ENCODE measurements at regions of chr1 and their contacts with region 1.

Region 1: GRCh38 chr1:68120136-68120791 is 69.8 kb upstream of the DIRAS3 start:
- DNase-seq: peak; percentile 41
- H3K4me3 ChIP-seq: no peak overlapping the region
- H3K27ac ChIP-seq: peak overlapping the region; percentile 43 to 67 (median 49)
- H3K4me1 ChIP-seq: peaks cover 0 to 4% (median 0%) of the 10 kb centered on the region in 4 donors
- H3K27me3 ChIP-seq: no peaks in the 10 kb centered on the region
- CTCF ChIP-seq: peak; percentile 78 to 89 (median 80)
- EP300 ChIP-seq: no peak
- POLR2A ChIP-seq: no peak

Region 2: GRCh38 chr1:67760030-67760821 is 360.0 kb before region 1 on chr1:
- in situ Hi-C with region 1: loop called in 2 of 4 experiments (anchors 10 kb)
- intact Hi-C with region 1: no loop called
- DNase-seq: peak; percentile 85
- H3K4me3 ChIP-seq: no peak overlapping the region
- H3K27ac ChIP-seq: peak overlapping the region; percentile 63 to 81 (median 76)
- H3K4me1 ChIP-seq: peaks cover 24 to 78% (median 38%) of the 10 kb centered on the region in 4 donors
- H3K27me3 ChIP-seq: no peaks in the 10 kb centered on the region
- CTCF ChIP-seq: peak; percentile 82 to 96 (median 86)
- EP300 ChIP-seq: no peak
- POLR2A ChIP-seq: peak; percentile 69

Region 3: DNA sequence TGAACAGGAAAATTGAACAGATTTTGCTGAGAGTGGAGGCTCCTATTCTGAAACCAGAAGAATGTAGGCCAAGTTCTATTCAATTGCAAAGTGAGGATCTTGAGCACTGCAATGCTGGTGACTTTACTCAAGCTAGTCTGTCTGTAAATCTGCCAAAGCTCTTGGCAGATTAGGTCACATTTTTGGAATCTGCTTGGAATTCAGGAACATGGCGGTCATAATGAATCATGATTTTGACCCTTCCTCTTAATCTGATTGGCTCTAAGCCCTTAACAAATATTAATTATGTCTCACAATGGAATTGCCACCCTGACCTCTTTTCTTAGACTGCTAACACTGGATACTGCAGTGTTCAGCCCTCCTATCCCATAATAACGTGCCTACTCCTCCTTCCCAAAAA is 279.8 kb before region 1 on chr1:
- in situ Hi-C with region 1: no loop called
- intact Hi-C with region 1: loop called (anchors 10 kb)
- DNase-seq: no peak
- H3K4me3 ChIP-seq: no peak overlapping the region
- H3K27ac ChIP-seq: no peak overlapping the region
- H3K4me1 ChIP-seq: peaks cover 0 to 13% (median 12%) of the 10 kb centered on the region in 4 donors
- H3K27me3 ChIP-seq: no peaks in the 10 kb centered on the region
- CTCF ChIP-seq: no peak
- EP300 ChIP-seq: no peak
- POLR2A ChIP-seq: no peak

Region 4: GRCh38 chr1:68232354-68233148 is 112.3 kb after region 1 on chr1 and contains the start of gene WLS:
- in situ Hi-C with region 1: no loop called
- intact Hi-C with region 1: loop called (anchors 5 kb)
- DNase-seq: peak; percentile 81
- H3K4me3 ChIP-seq: peak within 1 kb of the TSS; percentile 69 to 86 (median 72)
- H3K27ac ChIP-seq: peak within 1 kb of the TSS; percentile 83 to 95 (median 89)
- H3K4me1 ChIP-seq: peaks cover 0 to 39% (median 17%) of the 10 kb centered on the region in 4 donors
- H3K27me3 ChIP-seq: no peaks in the 10 kb centered on the region
- CTCF ChIP-seq: peak in 2 of 5 experiments; percentile 31 to 35
- EP300 ChIP-seq: no peak
- POLR2A ChIP-seq: peak; percentile 86
- total RNA-seq, gene WLS: 69.9 to 117 (median 98.7) TPM

Region 5: DNA sequence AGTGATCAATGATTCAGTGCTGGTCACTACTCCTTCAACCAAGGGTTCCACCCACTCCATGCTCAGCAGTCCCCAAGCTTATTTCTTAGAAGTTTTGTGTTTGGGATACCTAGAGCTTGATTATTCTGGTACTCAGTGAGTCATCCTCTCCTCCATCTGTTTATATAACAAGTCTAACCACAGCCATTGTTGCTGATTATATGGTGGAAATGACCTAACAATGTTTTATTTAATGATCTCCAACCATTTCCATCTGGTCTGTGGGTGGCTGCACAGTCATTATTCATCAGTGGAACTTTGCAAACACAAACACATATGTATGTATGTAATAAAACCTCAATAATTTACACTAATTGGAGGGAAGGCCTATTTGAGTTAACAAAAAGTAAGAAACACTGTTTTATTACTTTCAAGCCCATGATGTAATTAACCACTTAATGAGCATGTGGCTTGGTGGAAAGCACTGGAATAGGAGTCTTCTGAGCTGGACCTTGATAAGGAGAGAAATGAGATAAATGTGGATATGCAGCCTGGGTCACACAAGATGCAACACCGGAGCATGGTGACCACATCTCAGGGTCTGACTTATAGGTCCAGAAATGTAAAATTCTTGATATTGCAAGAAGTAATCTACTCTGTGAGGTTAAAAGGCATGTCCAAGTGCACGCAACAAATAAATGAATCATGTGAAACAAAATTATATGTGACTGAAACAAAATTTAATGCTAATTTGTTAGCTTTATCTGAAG is 211.0 kb after region 1 on chr1:
- in situ Hi-C with region 1: loop called in 3 of 4 experiments (anchors 10 kb)
- intact Hi-C with region 1: no loop called
- DNase-seq: no peak
- H3K4me3 ChIP-seq: no peak overlapping the region
- H3K27ac ChIP-seq: no peak overlapping the region
- H3K4me1 ChIP-seq: no peaks in the 10 kb centered on the region
- H3K27me3 ChIP-seq: no peaks in the 10 kb centered on the region
- CTCF ChIP-seq: no peak
- EP300 ChIP-seq: no peak
- POLR2A ChIP-seq: no peak

Region 6: GRCh38 chr1:68442822-68443556 is 322.7 kb after region 1 on chr1:
- in situ Hi-C with region 1: loop called in 1 of 4 experiments (anchors 25 kb)
- intact Hi-C with region 1: no loop called
- DNase-seq: peak; percentile 7
- H3K4me3 ChIP-seq: no peak overlapping the region
- H3K27ac ChIP-seq: no peak overlapping the region
- H3K4me1 ChIP-seq: no peaks in the 10 kb centered on the region
- H3K27me3 ChIP-seq: peaks cover 3% of the 10 kb centered on the region
- CTCF ChIP-seq: peak; percentile 40 to 50 (median 41)
- EP300 ChIP-seq: no peak
- POLR2A ChIP-seq: no peak

Region 7: GRCh38 chr1:68600049-68600661 is 479.9 kb after region 1 on chr1:
- in situ Hi-C with region 1: no loop called
- intact Hi-C with region 1: no loop called
- DNase-seq: no peak
- H3K4me3 ChIP-seq: peak overlapping the region in 1 of 4 donors; percentile 29
- H3K27ac ChIP-seq: no peak overlapping the region
- H3K4me1 ChIP-seq: peaks cover 0 to 4% (median 0%) of the 10 kb centered on the region in 4 donors
- H3K27me3 ChIP-seq: no peaks in the 10 kb centered on the region
- CTCF ChIP-seq: peak; percentile 28 to 56 (median 45)
- EP300 ChIP-seq: no peak
- POLR2A ChIP-seq: no peak